AG04450 (cell line): ENCODE measurements at regions of chr11 and their contacts with region 1.

Region 1: GRCh38 chr11:13462901-13463778 is at the start of gene BTBD10:
- DNase-seq: peak; percentile 88
- H3K4me3 ChIP-seq: peak within 1 kb of the TSS; percentile 86
- H3K27ac ChIP-seq: peak within 1 kb of the TSS; percentile 72
- H3K27me3 ChIP-seq: peaks cover 6% of the 10 kb centered on the region
- CTCF ChIP-seq: no peak
- polyA plus RNA-seq, gene BTBD10: 50.2 and 60.8 TPM in 2 replicates

Region 2: GRCh38 chr11:13449522-13449921 is 13.6 kb before region 1 on chr11:
- CTCF ChIA-PET with region 1: interaction called, 11 read pairs
- POLR2A ChIA-PET with region 1: no interaction called
- DNase-seq: no peak
- H3K4me3 ChIP-seq: no peak overlapping the region
- H3K27ac ChIP-seq: no peak overlapping the region
- H3K27me3 ChIP-seq: no peaks in the 10 kb centered on the region
- CTCF ChIP-seq: no peak

Region 3: GRCh38 chr11:13480195-13480594 is 17.1 kb after region 1 on chr11:
- CTCF ChIA-PET with region 1: interaction called, 14 read pairs
- POLR2A ChIA-PET with region 1: no interaction called
- DNase-seq: no peak
- H3K4me3 ChIP-seq: no peak overlapping the region
- H3K27ac ChIP-seq: no peak overlapping the region
- H3K27me3 ChIP-seq: peaks cover 2% of the 10 kb centered on the region
- CTCF ChIP-seq: no peak